IMR-90 (cell line): ENCODE measurements at regions of chr7 and their contacts with region 1.

Region 1: DNA sequence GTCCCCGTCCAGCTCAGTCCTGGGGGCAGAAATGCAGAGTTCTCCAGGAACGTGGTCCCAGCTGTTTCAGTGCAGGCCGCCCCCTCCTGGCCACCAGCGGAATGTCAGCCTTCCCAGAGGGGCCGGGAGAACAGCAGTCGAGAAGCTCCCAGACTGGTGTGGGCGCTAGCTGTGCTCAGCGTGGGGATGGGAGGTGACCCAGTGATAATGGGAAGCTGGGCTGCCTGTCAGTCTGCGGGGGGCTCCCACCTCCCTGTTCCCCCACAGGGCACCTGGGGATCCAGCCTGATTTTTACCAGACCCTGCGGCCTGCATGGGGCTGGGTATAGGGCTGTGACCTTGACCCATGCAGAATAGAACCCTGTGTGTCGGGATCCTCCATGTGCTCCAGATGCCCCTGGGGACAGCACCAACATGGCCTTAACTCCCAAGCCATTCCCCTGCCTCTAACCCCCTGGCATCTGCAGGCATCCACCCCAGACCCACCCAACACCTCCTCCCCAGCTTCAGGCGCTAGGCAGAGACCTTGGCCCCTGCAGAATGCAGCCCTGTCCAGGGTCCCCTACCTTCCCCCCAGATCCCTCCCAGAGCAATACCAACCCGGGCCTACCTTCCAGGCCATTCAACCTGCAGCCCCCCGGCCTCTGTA is 946 bp upstream of the ELN start:
- DNase-seq: peak; percentile 46
- ATAC-seq: peak; percentile 89
- H3K4me3 ChIP-seq: no peak overlapping the region
- H3K27ac ChIP-seq: no peak overlapping the region
- H3K4me1 ChIP-seq: peaks cover 33% of the 10 kb centered on the region
- H3K27me3 ChIP-seq: no peaks in the 10 kb centered on the region
- CTCF ChIP-seq: peak; percentile 89
- POLR2A ChIP-seq: no peak
- RAD21 ChIP-seq: peak; percentile 78

Region 2: GRCh38 chr7:73817121-73817520 is 209.9 kb before region 1 on chr7:
- CTCF ChIA-PET with region 1: interaction called, 10 read pairs
- POLR2A ChIA-PET with region 1: no interaction called
- dilution Hi-C with region 1: no loop called
- in situ Hi-C with region 1: no loop called
- intact Hi-C with region 1: no loop called
- DNase-seq: no peak
- ATAC-seq: no peak
- H3K4me3 ChIP-seq: no peak overlapping the region
- H3K27ac ChIP-seq: no peak overlapping the region
- H3K4me1 ChIP-seq: 0 out of 2 replicates have a peak, but pooled peaks cover 2% of the 10 kb centered on the region
- H3K27me3 ChIP-seq: no peaks in the 10 kb centered on the region
- CTCF ChIP-seq: no peak
- POLR2A ChIP-seq: no peak
- RAD21 ChIP-seq: no peak

Region 3: DNA sequence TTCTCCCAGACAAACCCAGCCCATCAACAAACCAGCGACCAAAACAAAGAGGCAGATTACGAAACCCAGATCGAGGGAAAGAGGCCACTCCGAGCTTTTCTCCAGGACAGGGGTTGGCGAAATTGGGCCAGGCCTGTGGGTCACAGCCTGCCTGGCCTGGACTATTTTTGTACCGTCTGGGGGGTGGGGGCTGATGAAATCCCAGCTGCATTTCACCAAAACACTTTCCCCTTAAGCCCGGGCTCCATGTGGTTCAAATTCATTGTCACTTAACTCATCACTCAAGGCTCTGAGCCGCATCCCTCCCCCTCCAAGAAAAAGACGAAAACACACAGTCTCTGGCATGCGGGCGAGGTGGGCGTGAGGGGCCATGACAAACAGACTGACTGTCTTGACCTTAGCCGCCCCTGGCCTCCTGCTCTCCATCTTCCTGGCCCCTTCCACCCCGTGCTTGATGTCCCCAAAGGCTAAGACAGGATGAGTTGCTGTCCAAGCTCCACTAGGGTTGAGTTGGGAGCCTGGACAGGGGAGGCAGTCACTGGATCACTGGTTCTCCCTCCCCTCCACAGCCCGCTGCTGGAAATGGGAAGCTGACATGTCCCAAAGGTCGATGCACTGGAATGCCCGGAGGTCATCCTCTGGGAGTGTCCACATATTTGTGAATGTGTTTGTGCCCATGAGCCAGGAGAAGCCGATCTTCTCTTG is 146.9 kb before region 1 on chr7:
- CTCF ChIA-PET with region 1: interaction called, 13 read pairs
- POLR2A ChIA-PET with region 1: no interaction called
- dilution Hi-C with region 1: no loop called
- in situ Hi-C with region 1: no loop called
- intact Hi-C with region 1: no loop called
- DNase-seq: peak; percentile 53
- ATAC-seq: peak; percentile 79
- H3K4me3 ChIP-seq: no peak overlapping the region
- H3K27ac ChIP-seq: peak overlapping the region; percentile 35; the same call in 1 of the 2 replicates
- H3K4me1 ChIP-seq: peaks cover 22% of the 10 kb centered on the region
- H3K27me3 ChIP-seq: no peaks in the 10 kb centered on the region; the same call in 1 of the 2 replicates
- CTCF ChIP-seq: no peak
- POLR2A ChIP-seq: no peak
- RAD21 ChIP-seq: no peak

Region 4: GRCh38 chr7:74094224-74095101 is 67.4 kb after region 1 on chr7:
- CTCF ChIA-PET with region 1: no interaction called
- POLR2A ChIA-PET with region 1: no interaction called
- dilution Hi-C with region 1: no loop called
- in situ Hi-C with region 1: no loop called
- intact Hi-C with region 1: no loop called
- DNase-seq: peak; percentile 95
- ATAC-seq: peak; percentile 84
- H3K4me3 ChIP-seq: peak overlapping the region; percentile 21
- H3K27ac ChIP-seq: peak overlapping the region; percentile 81
- H3K4me1 ChIP-seq: peaks cover 22% of the 10 kb centered on the region
- H3K27me3 ChIP-seq: no peaks in the 10 kb centered on the region
- CTCF ChIP-seq: no peak
- POLR2A ChIP-seq: no peak; the same call in 1 of the 2 replicates
- RAD21 ChIP-seq: no peak

Region 5: GRCh38 chr7:74183613-74184450 is 156.8 kb after region 1 on chr7:
- CTCF ChIA-PET with region 1: no interaction called
- POLR2A ChIA-PET with region 1: no interaction called
- dilution Hi-C with region 1: no loop called
- in situ Hi-C with region 1: no loop called
- intact Hi-C with region 1: no loop called
- DNase-seq: no peak
- ATAC-seq: no peak
- H3K4me3 ChIP-seq: no peak overlapping the region
- H3K27ac ChIP-seq: no peak overlapping the region
- H3K4me1 ChIP-seq: peaks cover 31% of the 10 kb centered on the region
- H3K27me3 ChIP-seq: no peaks in the 10 kb centered on the region
- CTCF ChIP-seq: 0 out of 2 replicates have a peak, but pooled peaks have one; percentile 16
- POLR2A ChIP-seq: no peak
- RAD21 ChIP-seq: no peak